ENCODE measurements at regions of chr2 and their contacts with region 1.

Region 1: GRCh38 chr2:120174963-120175581 is 48.1 kb downstream of the TMEM185B start:
- DNase-seq: peak in 2 of 35 experiments; percentile 30 to 79
- ATAC-seq: no peak
- H3K4me3 ChIP-seq: no peak overlapping the region
- H3K4me3 Mint-ChIP-seq: no peak overlapping the region
- H3K27ac ChIP-seq: peak overlapping the region; percentile 48
- H3K27ac Mint-ChIP-seq: peak overlapping the region; percentile 78 to 100
- H3K4me1 ChIP-seq: peaks cover 36 to 39% of the 10 kb centered on the region in 2 experiments
- H3K4me1 Mint-ChIP-seq: peaks cover 45 to 52% (median 49%) of the 10 kb centered on the region in 3 donors
- H3K27me3 ChIP-seq: no peaks in the 10 kb centered on the region
- H3K27me3 Mint-ChIP-seq: no peaks in the 10 kb centered on the region

Region 2: DNA sequence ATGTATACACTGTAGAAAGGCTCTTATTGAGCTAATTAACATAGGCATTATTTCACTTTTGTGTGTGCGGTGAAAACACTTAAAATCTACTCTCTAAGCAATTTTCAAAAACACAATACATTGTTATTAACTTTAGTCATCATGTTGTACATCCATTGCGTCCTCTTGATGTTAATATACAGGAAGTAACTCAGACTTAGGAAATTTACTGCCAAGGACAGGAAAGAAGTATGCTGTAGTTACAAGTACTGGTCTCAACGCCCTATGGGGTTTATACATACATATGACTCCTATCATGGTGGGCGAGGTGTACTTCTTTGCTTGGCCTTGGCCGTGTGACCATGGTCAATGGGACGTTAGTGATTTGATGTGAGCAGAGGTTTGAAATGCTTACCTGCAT is 666.3 kb before region 1 on chr2:
- CTCF ChIA-PET with region 1: no interaction called
- POLR2A ChIA-PET with region 1: no interaction called
- DNase-seq: no peak
- ATAC-seq: no peak
- H3K4me3 ChIP-seq: no peak overlapping the region
- H3K4me3 Mint-ChIP-seq: no peak overlapping the region
- H3K27ac ChIP-seq: no peak overlapping the region
- H3K27ac Mint-ChIP-seq: no peak overlapping the region
- H3K4me1 ChIP-seq: no peaks in the 10 kb centered on the region
- H3K4me1 Mint-ChIP-seq: no peaks in the 10 kb centered on the region
- H3K27me3 ChIP-seq: no peaks in the 10 kb centered on the region
- H3K27me3 Mint-ChIP-seq: peaks cover 10 to 28% of the 10 kb centered on the region in 2 donors

Region 3: DNA sequence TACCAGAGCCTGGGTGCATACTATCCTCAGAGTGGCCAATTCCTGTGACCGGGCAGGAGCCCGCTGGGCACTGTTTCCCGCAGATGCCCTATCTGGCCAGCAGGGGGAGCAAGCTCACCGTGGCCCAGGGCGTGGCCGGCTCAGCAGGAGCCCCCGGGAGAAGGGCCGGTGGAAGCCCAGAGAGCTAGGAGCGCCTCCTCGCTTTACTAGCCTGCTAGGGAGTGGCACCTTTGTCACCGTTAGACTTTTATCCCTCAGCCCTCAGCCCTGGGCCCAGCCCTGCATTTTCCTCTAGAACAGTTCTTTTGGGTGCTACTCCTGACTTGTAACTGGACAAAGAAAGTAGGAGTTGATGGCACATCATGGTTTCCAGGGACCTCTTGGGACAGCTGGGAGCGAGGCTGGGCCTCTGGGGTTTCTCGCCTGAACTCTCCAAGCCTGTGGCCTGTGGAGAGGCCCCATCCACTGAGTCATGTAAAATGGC is 472.1 kb before region 1 on chr2:
- CTCF ChIA-PET with region 1: interaction called in 1 of 2 experiments, 26 read pairs
- POLR2A ChIA-PET with region 1: no interaction called
- DNase-seq: peak; percentile 19 to 78 (median 49)
- ATAC-seq: peak; percentile 80 to 86 (median 82)
- H3K4me3 ChIP-seq: no peak overlapping the region
- H3K4me3 Mint-ChIP-seq: no peak overlapping the region
- H3K27ac ChIP-seq: peak overlapping the region; percentile 9
- H3K27ac Mint-ChIP-seq: no peak overlapping the region
- H3K4me1 ChIP-seq: peaks cover 5 to 24% of the 10 kb centered on the region in 2 experiments
- H3K4me1 Mint-ChIP-seq: peaks cover 13 to 28% (median 17%) of the 10 kb centered on the region in 3 donors
- H3K27me3 ChIP-seq: peaks cover 0 to 2% of the 10 kb centered on the region in 2 experiments
- H3K27me3 Mint-ChIP-seq: peaks cover 0 to 5% of the 10 kb centered on the region in 2 donors

Region 4: DNA sequence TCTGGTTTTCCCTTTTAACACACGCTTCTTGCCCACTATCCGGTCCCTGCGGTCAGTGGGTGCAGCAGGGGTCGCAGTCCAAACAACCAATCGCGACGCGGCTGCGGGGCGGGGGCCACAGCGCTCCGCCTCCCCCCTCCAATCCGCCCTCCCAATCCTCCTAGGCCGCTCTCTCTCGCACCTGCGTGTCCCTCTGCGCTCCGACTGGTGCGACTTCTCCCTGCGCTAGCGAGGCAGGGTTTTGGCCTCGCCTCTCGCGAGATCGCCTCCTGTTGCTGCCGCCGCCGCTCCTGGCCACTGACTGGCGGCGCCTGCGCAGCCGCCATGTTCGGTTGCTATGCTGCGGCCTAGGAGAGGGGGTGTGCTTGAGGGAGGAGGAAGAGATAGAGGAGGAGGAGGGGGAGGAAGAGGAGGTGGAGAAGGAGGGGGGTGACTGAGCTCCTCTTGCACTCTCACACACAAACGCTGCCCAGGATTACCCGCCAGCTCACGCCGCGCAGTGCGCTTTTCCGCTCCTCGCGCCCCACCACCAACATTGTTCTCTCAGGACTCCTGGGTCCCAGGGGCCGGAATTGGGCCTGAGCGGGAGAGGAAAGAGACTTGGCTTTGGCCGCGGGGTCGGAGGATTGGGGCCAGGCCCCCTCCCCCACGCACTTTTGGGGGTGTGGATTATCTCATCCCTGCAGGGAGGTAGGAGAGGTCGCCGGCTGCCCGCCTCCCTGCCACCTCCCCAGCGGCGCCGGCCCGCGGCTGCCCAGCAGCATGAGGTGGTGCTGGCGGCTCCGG is 415.4 kb before region 1 on chr2 and contains the start of gene PTPN4:
- CTCF ChIA-PET with region 1: interaction called, 3 to 22 read pairs
- POLR2A ChIA-PET with region 1: interaction called, 4 read pairs
- DNase-seq: peak; percentile 86 to 99 (median 96)
- ATAC-seq: peak; percentile 89 to 92 (median 90)
- H3K4me3 ChIP-seq: peak within 1 kb of the TSS; percentile 95 to 98
- H3K4me3 Mint-ChIP-seq: peak within 1 kb of the TSS; percentile 83 to 93 (median 93)
- H3K27ac ChIP-seq: peak within 1 kb of the TSS; percentile 89
- H3K27ac Mint-ChIP-seq: peak within 1 kb of the TSS; percentile 82 to 84
- H3K4me1 ChIP-seq: peaks cover 7 to 19% of the 10 kb centered on the region in 2 experiments
- H3K4me1 Mint-ChIP-seq: peaks cover 42 to 45% (median 45%) of the 10 kb centered on the region in 3 donors
- H3K27me3 ChIP-seq: no peaks in the 10 kb centered on the region
- H3K27me3 Mint-ChIP-seq: no peaks in the 10 kb centered on the region
- total RNA-seq, gene PTPN4: 105 to 134 (median 126) TPM

Region 5: DNA sequence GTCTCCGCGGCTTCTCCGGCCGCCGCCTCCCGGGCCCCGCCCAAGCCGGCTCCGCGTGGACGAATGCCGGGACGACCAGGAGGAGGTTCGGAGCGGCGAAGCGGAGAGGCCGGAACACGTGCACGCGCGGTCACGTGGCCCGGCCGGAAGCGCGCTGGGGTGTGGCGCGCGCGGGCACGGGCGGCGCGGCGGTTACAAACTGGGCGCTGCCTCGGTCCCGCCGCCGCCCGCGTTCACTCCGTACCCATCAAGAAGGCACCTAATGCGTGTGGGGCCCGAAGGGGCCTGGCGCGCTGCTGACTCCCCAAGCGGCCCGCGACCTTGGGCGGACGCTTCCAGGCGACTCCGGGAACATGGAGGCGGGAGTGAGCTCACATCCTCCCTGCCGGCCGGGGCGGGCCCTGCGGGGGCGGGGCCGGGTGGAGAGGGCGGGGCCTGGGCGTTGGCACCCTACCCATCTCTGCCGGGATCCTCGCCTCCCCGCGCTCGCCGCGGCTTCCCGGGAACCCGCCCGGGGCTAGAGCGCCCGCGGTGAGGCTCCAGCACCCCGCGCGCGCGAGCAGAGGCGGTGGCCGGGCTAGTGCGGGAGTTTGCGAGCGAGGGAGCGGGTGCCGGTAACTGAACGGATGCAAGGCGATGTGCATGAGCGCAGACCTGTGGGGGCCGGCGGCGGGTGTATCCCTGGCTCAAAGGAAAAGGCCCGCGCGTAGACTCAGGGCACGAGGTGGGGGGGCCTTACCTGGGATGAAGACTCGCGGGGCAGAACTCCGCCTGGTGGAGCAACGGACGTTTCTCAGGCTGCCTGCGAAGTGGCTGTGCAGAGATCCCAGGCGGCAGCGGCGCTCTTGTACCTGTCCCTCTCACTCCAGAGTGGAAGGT is 48.2 kb after region 1 on chr2 and contains the start of gene TMEM185B:
- CTCF ChIA-PET with region 1: interaction called, 3 to 15 read pairs
- POLR2A ChIA-PET with region 1: interaction called in 1 of 2 experiments, 3 read pairs
- DNase-seq: peak; percentile 73 to 91 (median 83)
- ATAC-seq: peak; percentile 92 to 96 (median 94)
- H3K4me3 ChIP-seq: peak within 1 kb of the TSS; percentile 67 to 73
- H3K4me3 Mint-ChIP-seq: peak within 1 kb of the TSS; percentile 77 to 84 (median 82)
- H3K27ac ChIP-seq: peak within 1 kb of the TSS; percentile 78
- H3K27ac Mint-ChIP-seq: peak within 1 kb of the TSS; percentile 89 to 92
- H3K4me1 ChIP-seq: peaks cover 2 to 35% of the 10 kb centered on the region in 2 experiments
- H3K4me1 Mint-ChIP-seq: peaks cover 67 to 69% (median 68%) of the 10 kb centered on the region in 3 donors
- H3K27me3 ChIP-seq: no peaks in the 10 kb centered on the region
- H3K27me3 Mint-ChIP-seq: no peaks in the 10 kb centered on the region
- total RNA-seq, gene TMEM185B: 14.8 to 25.2 (median 21.9) TPM

Region 6: GRCh38 chr2:120252225-120253021 is 77.4 kb after region 1 on chr2 and contains the start of gene RALB:
- CTCF ChIA-PET with region 1: interaction called in 1 of 2 experiments, 12 read pairs
- POLR2A ChIA-PET with region 1: interaction called, 3 to 5 read pairs
- DNase-seq: peak; percentile 96 to 99 (median 98)
- ATAC-seq: peak; percentile 94 to 97 (median 96)
- H3K4me3 ChIP-seq: peak within 1 kb of the TSS; percentile 82 to 97
- H3K4me3 Mint-ChIP-seq: peak within 1 kb of the TSS; percentile 98 to 100 (median 100)
- H3K27ac ChIP-seq: peak within 1 kb of the TSS; percentile 59
- H3K27ac Mint-ChIP-seq: peak within 1 kb of the TSS; percentile 96
- H3K4me1 ChIP-seq: peaks cover 6 to 16% of the 10 kb centered on the region in 2 experiments
- H3K4me1 Mint-ChIP-seq: peaks cover 44 to 50% (median 45%) of the 10 kb centered on the region in 3 donors
- H3K27me3 ChIP-seq: peaks cover 0 to 7% of the 10 kb centered on the region in 2 experiments
- H3K27me3 Mint-ChIP-seq: peaks cover 10% of the 10 kb centered on the region in 2 donors
- total RNA-seq, gene RALB: 10.3 to 20.1 (median 12.9) TPM

Region 7: DNA sequence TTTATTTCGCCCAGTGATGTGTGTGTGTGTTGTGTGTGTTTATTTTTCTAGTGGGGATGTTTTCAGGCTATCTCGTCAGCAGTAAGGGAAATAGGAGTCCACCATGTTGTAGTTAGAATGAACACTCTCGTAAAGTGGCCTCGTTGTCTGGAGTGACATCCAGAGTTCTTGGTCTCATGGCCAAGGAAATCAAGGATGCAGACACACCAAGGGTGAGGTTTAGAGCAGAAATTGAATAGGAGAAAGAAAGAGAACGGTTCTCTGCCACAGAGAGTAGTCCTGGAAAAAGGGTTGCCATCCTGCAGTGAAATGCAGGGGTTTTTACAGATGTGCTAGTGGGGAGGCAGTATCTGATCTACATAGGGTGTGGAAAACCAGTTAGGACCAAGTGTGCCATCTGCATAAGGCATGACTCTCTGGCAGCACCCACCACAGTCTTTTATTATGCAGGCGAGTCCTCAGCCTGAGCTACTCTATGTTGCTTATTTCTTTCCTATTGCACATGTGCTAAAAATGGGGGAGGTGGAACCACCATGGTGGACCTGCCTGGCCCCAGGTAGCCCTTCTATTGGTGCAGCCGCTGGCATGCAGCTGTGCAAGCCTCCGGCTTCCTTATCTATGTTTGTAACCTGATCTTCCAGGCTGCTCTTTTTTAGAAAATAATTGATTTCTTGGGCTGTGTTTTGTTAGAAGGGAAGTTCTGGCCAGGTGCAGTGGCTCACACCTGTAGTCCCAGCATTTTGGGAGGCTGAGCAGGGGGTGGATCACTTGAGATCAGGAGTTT is 100.7 kb after region 1 on chr2:
- CTCF ChIA-PET with region 1: no interaction called
- POLR2A ChIA-PET with region 1: no interaction called
- DNase-seq: no peak
- ATAC-seq: no peak
- H3K4me3 ChIP-seq: no peak overlapping the region
- H3K4me3 Mint-ChIP-seq: no peak overlapping the region
- H3K27ac ChIP-seq: no peak overlapping the region
- H3K27ac Mint-ChIP-seq: no peak overlapping the region
- H3K4me1 ChIP-seq: peaks cover 0 to 2% of the 10 kb centered on the region in 2 experiments
- H3K4me1 Mint-ChIP-seq: peaks cover 0 to 15% (median 4%) of the 10 kb centered on the region in 3 donors
- H3K27me3 ChIP-seq: no peaks in the 10 kb centered on the region
- H3K27me3 Mint-ChIP-seq: no peaks in the 10 kb centered on the region

Region 8: DNA sequence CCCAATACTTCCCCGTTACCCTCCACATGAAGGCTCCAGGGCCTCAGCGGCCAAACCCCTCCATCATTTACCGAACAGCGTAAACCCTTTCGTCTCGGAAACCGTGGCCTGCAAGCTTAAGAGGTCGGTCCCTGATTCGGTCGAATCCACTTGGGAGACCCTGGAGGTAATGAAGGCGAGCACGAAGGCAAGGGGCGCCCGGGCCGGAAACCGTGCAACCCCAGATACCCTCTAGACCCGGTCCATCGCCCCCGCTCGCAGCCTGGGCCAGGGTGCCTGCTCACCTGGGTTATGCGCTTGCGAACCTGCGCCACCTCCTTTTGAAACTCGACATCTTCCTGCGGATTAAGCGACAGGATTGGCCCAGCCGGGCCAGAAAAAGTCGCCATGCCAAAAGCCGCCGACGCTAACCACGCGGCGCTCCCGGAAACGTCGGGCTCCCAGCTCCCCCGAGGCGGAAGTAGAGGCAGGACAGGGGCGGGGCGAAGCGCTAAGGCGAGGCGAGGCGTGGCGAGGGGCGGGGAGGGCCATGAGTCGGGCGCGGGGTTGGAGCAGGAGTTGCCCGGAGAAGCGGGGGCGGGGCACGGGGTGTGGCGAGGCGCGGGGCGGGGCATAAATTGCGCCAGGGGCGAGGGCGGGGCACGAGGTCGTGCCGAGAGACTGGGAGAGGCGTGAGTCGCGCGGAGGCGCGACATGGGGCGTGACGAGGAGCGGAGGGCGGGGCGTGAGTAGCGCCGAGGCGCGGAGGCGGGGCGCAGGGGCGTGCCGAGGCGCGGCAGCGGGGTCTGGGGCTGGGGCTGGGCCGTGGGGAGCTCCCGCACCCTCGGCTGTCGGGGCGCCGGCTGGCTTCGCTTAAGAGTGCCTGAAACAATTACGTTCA is 1561.6 kb after region 1 on chr2 and contains the start of gene NIFK:
- CTCF ChIA-PET with region 1: no interaction called
- POLR2A ChIA-PET with region 1: interaction called in 1 of 2 experiments, 14 read pairs
- DNase-seq: peak; percentile 98 to 100 (median 100)
- ATAC-seq: peak; percentile 88 to 96 (median 88)
- H3K4me3 ChIP-seq: peak within 1 kb of the TSS; percentile 98 to 100
- H3K4me3 Mint-ChIP-seq: peak within 1 kb of the TSS; percentile 96 to 100 (median 97)
- H3K27ac ChIP-seq: peak within 1 kb of the TSS; percentile 80
- H3K27ac Mint-ChIP-seq: peak within 1 kb of the TSS; percentile 95 to 96
- H3K4me1 ChIP-seq: peaks cover 21 to 26% of the 10 kb centered on the region in 2 experiments
- H3K4me1 Mint-ChIP-seq: peaks cover 44 to 57% (median 45%) of the 10 kb centered on the region in 3 donors
- H3K27me3 ChIP-seq: no peaks in the 10 kb centered on the region
- H3K27me3 Mint-ChIP-seq: no peaks in the 10 kb centered on the region
- total RNA-seq, gene NIFK: 29.0 to 60.0 (median 53.9) TPM

Measured in T-cell (primary cell).